MCF 10A (cell line): ENCODE measurements at regions of chr13 and their contacts with region 1.

Region 1: GRCh38 chr13:99087096-99087953 is 109.5 kb upstream of the DOCK9 start:
- DNase-seq: peak; percentile 89
- H3K4me3 Mint-ChIP-seq: peak overlapping the region; percentile 98
- H3K27ac Mint-ChIP-seq: peak overlapping the region; percentile 85
- H3K4me1 Mint-ChIP-seq: peaks cover 21% of the 10 kb centered on the region
- H3K27me3 Mint-ChIP-seq: no peaks in the 10 kb centered on the region
- CTCF ChIP-seq: no peak

Region 2: DNA sequence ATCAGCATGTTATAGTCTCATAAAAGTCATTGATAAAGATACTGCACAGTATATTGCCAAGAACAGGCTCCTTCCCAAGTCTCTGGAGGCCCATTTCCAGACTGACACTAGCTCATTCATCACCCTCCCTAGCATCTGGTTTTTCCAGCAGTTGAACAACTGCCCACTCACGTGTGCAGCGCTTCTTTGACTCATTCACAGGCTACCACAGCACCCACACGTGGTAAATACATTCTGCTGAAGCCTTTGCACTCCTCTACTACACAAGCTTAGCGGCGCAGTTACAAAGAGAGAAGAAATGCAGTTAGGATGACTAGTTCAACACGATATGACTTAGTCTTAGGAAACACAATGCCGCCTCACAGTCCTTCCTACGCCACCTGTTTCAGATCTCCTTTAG is 197.1 kb before region 1 on chr13:
- CTCF ChIA-PET with region 1: interaction called, 4 read pairs
- POLR2A ChIA-PET with region 1: interaction called, 5 read pairs
- intact Hi-C with region 1: loop called (anchors 5 kb)
- DNase-seq: peak; percentile 85
- H3K4me3 Mint-ChIP-seq: no peak overlapping the region
- H3K27ac Mint-ChIP-seq: peak overlapping the region; percentile 71
- H3K4me1 Mint-ChIP-seq: peaks cover 19% of the 10 kb centered on the region
- H3K27me3 Mint-ChIP-seq: no peaks in the 10 kb centered on the region
- CTCF ChIP-seq: no peak

Region 3: GRCh38 chr13:99051768-99052455 is 35.4 kb before region 1 on chr13:
- CTCF ChIA-PET with region 1: interaction called, 14 read pairs
- POLR2A ChIA-PET with region 1: interaction called, 74 read pairs
- intact Hi-C with region 1: no loop called
- DNase-seq: no peak
- H3K4me3 Mint-ChIP-seq: no peak overlapping the region
- H3K27ac Mint-ChIP-seq: no peak overlapping the region
- H3K4me1 Mint-ChIP-seq: peaks cover 39% of the 10 kb centered on the region
- H3K27me3 Mint-ChIP-seq: no peaks in the 10 kb centered on the region
- CTCF ChIP-seq: no peak

Region 4: GRCh38 chr13:99067160-99067985 is 20.0 kb before region 1 on chr13:
- CTCF ChIA-PET with region 1: interaction called, 11 read pairs
- POLR2A ChIA-PET with region 1: interaction called, 28 read pairs
- intact Hi-C with region 1: no loop called
- DNase-seq: peak; percentile 50
- H3K4me3 Mint-ChIP-seq: no peak overlapping the region
- H3K27ac Mint-ChIP-seq: peak overlapping the region; percentile 87
- H3K4me1 Mint-ChIP-seq: peaks cover 46% of the 10 kb centered on the region
- H3K27me3 Mint-ChIP-seq: no peaks in the 10 kb centered on the region
- CTCF ChIP-seq: no peak

Region 5: DNA sequence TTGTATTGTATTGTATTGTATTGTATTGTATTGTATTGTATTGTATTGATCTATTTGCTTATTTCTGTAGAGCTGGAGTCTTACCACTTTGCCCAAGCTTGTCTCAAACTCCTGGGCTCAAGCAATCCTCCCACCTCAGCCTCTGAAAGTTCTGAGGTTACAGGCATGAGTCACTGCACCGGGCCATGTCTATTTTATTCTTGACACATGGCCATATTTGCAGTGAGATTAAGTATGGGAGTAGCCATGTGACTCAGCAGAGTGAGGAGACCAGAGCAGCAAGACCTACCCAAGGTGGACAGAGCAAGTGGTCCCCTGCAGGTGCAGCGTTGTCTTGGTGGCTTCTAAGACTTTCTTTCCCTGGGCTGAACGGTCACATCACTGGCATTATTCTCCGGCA is 64.2 kb after region 1 on chr13:
- CTCF ChIA-PET with region 1: interaction called, 5 read pairs
- POLR2A ChIA-PET with region 1: interaction called, 42 read pairs
- intact Hi-C with region 1: loop called (anchors 1 kb)
- DNase-seq: peak; percentile 96
- H3K4me3 Mint-ChIP-seq: peak overlapping the region; percentile 11
- H3K27ac Mint-ChIP-seq: peak overlapping the region; percentile 91
- H3K4me1 Mint-ChIP-seq: peaks cover 31% of the 10 kb centered on the region
- H3K27me3 Mint-ChIP-seq: no peaks in the 10 kb centered on the region
- CTCF ChIP-seq: no peak